PC-3 (cell line): ENCODE measurements at regions of chr11 and their contacts with region 1.

Region 1: DNA sequence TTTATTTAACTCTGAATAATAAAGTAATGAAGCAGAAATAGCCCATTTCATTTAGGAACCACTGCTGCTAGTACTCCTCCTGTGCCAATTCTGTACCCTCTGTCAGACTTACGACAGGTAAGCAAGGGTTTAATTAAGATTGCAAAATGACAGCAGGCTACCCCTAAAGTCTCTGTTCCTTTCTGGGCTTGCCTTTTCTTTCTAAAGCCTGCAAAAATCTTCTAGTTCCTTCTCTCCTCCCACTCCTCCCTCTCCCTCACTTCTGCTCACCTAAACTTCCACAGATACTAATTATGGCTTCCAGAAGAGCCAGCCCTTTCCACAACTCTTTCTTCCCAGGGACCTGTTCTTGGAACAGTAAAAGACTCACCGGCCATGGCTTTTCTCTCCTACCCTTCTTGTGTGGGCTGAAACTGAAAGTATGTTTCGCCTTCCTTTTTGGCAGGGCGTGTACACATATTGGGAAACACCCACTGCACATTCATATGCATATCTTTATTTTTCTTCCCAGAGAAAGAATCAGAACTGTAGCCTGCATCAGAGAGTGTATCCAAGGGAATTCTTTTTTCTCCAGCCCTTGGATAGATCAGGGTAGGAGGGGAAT is at the start of gene CARD16:
- DNase-seq: no peak
- ATAC-seq: no peak
- H3K4me3 ChIP-seq: no peak within 1 kb of the TSS
- H3K27ac ChIP-seq: no peak within 1 kb of the TSS
- H3K4me1 ChIP-seq: peaks cover 16% of the 10 kb centered on the region
- H3K27me3 ChIP-seq: no peaks in the 10 kb centered on the region
- CTCF ChIP-seq: no peak
- total RNA-seq, gene CARD16: not detected in 2 replicates

Region 2: DNA sequence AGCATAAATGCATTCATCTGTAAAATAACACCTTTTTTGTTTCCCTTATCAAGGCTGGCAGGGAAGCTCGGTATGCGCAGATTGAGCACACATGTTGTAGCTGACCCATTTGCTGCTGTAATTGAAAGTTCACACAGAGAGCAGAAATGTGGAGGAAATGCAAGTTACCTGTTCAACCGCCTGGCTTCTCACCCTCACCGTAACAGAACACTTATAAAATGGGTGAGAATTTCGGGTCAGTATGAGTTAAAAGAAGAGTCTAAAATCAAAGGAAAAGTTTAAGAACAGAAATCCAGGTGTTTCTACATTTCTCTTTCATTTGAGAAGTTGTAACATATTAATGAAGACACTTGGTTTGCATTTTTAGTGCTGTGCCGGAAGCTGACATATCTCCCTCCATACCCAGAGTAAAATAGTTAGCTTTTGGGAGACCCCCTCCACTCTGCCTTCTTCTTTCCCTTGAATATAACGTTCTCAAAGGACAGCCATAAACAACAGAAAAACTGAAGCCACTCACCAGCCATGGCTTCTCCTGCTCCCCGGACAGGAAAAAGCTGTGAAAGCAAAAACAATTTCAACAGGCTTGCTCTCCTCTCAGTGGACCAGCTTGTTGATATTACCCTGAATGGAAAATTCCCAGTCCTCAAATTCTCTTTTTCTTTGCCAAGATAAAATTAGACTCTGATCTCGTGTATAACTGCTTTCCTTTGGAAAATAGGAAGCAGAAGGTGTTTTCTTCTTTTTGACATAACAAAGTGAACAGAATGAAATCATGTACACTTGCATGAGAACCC is 146.9 kb before region 1 on chr11 and contains the start of gene CASP12:
- CTCF ChIA-PET with region 1: no interaction called
- POLR2A ChIA-PET with region 1: no interaction called
- intact Hi-C with region 1: no loop called
- DNase-seq: no peak
- ATAC-seq: no peak
- H3K4me3 ChIP-seq: no peak within 1 kb of the TSS
- H3K27ac ChIP-seq: no peak within 1 kb of the TSS
- H3K4me1 ChIP-seq: no peaks in the 10 kb centered on the region
- H3K27me3 ChIP-seq: no peaks in the 10 kb centered on the region
- CTCF ChIP-seq: no peak
- total RNA-seq, gene CASP12: not detected in 2 replicates

Region 3: DNA sequence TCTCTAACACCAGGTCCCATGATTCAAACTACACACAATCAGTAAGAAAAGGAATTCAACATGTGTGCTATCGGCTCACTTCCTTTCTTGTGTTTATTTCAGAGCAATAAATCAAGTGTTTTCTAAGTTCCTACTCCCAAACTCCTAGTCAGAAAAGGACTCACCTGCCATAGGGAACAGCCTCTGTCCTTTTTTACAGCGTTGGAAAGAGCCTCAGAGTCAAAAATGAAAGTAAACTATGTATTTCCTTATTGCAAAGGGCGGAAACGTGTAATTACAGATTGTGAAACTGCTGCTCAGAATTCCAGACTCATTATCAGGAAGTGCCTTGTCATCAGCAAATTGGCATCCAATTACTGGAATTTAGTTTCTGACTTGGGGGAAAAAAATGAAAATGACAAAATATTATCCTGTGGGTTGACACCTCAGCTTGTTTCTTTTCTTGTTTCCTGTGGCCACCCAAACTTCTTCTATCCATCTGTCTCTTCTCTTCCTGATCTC is 76.6 kb before region 1 on chr11 and contains the start of gene CASP4:
- CTCF ChIA-PET with region 1: no interaction called
- POLR2A ChIA-PET with region 1: no interaction called
- intact Hi-C with region 1: loop called (anchors 1 kb)
- DNase-seq: peak; percentile 81
- ATAC-seq: peak; percentile 79
- H3K4me3 ChIP-seq: peak within 1 kb of the TSS; percentile 74
- H3K27ac ChIP-seq: peak within 1 kb of the TSS; percentile 71
- H3K4me1 ChIP-seq: peaks cover 25% of the 10 kb centered on the region
- H3K27me3 ChIP-seq: no peaks in the 10 kb centered on the region
- CTCF ChIP-seq: no peak
- total RNA-seq, gene CASP4: 38.5 and 40.9 TPM in 2 replicates

Region 4: DNA sequence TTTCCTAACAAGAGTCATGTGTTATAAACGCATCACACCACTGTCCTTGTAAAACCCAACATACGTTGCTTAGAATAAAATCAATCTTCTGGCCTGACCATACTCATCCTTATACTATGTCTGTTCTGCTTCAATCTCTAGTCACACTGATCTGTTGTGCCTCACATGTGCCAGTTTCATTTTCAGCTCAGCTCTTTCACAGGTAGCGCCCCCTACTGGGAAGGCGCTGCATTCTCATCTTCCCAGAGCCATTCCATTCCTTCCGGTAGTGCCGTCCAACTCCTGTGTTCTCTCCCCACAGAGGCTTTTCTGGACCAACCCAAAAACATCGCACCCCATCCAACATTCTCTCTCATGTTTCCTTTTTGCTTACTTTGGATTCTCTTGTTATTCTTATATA is 44.2 kb before region 1 on chr11:
- CTCF ChIA-PET with region 1: no interaction called
- POLR2A ChIA-PET with region 1: no interaction called
- intact Hi-C with region 1: loop called (anchors 5 kb)
- DNase-seq: no peak
- ATAC-seq: no peak
- H3K4me3 ChIP-seq: no peak overlapping the region
- H3K27ac ChIP-seq: no peak overlapping the region
- H3K4me1 ChIP-seq: no peaks in the 10 kb centered on the region
- H3K27me3 ChIP-seq: no peaks in the 10 kb centered on the region
- CTCF ChIP-seq: peak; percentile 82

Region 5: DNA sequence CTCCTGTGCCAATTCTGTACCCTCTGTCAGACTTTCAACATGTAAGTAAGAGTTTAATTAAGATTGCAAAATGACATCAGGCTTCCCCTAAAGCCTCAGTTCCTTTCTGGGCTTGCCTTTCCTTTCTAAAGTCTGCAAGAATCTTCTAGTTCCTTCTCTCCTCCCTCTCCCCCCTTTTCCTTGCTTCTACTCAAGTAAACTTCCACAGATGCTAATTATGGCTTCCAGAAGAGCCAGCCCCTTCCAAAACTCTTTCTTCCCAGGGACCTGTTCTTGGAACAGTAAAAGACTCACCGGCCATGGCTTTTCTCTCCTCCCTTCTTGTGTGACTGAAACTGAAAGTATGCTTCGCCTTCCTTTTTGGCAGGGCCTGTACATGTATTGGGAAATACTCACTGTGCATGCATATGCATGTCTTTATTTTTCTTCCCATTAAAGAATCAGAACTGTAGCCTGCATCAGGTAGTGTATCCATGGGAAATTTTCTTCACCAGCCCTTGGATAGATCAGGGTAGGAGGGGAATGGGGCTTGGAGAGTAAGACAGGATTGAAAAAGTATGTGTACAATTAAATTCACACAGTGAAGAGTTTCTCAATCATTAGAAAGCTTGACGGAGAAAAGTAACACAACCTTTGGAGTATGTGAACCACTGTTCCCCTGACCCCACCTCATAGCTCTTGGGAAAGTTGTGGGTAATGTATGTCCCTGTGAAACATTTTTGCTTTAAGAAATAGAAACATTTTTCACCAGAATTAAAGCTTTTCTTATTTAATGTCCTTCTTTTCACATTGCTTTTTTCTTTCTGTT is 10.0 kb before region 1 on chr11 and contains the start of gene CASP1:
- CTCF ChIA-PET with region 1: no interaction called
- POLR2A ChIA-PET with region 1: no interaction called
- intact Hi-C with region 1: no loop called
- DNase-seq: peak; percentile 19
- ATAC-seq: peak; percentile 18; the same call in 1 of the 2 replicates
- H3K4me3 ChIP-seq: no peak within 1 kb of the TSS
- H3K27ac ChIP-seq: no peak within 1 kb of the TSS
- H3K4me1 ChIP-seq: no peaks in the 10 kb centered on the region
- H3K27me3 ChIP-seq: no peaks in the 10 kb centered on the region
- CTCF ChIP-seq: no peak
- total RNA-seq, gene CASP1: 0.33 TPM in 1 of 2 replicates, not detected in the other

Region 6: DNA sequence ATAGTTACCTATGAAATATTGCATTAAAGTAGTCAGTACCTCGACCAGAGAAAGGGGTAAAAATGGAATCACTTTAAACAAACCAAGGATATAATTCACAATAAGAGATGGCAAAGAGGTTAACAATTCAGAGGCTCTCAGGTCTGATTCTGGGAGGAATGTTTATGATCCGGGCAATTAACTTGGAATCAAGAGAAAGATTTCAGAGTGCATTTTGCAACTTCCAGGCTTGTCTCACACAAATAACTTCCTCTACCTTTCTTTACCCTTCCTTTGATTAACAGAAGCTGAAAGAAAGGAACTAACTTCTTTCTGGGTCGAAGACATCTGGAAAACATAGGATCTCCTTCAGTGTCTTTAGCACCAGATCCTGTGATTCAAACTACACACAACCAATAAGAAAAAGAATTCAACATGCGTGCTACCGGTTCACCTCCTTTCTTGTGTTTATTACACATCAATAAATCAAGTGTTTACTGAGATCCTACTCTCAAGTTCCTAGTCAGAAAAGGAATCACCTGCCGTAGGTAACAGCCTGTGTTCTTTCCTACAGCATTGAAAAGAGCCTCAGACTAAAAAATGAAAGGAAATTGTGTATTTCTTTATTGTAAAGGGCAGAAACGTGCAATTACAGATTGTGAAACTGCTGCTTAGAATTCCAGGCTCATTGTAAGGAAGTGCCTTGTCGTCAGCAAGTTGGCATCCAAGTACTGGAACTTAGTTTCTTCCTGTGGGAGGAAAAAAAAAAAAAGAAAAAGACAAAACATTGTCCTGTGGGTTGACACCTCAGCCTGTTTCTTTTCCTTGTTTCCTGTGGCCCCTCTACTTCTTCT is 65.0 kb after region 1 on chr11:
- CTCF ChIA-PET with region 1: no interaction called
- POLR2A ChIA-PET with region 1: no interaction called
- intact Hi-C with region 1: loop called (anchors 5 kb)
- DNase-seq: peak; percentile 29
- ATAC-seq: peak; percentile 7; the same call in 1 of the 2 replicates
- H3K4me3 ChIP-seq: peak overlapping the region; percentile 13; the same call in 1 of the 2 replicates
- H3K27ac ChIP-seq: peak overlapping the region; percentile 69
- H3K4me1 ChIP-seq: peaks cover 40% of the 10 kb centered on the region
- H3K27me3 ChIP-seq: no peaks in the 10 kb centered on the region
- CTCF ChIP-seq: no peak

Region 7: GRCh38 chr11:105144887-105145286 is 99.9 kb after region 1 on chr11:
- CTCF ChIA-PET with region 1: no interaction called
- POLR2A ChIA-PET with region 1: no interaction called
- intact Hi-C with region 1: loop called (anchors 1 kb)
- DNase-seq: peak; percentile 91
- ATAC-seq: peak; percentile 99
- H3K4me3 ChIP-seq: peak overlapping the region; percentile 4; the same call in 1 of the 2 replicates
- H3K27ac ChIP-seq: peak overlapping the region; percentile 45
- H3K4me1 ChIP-seq: peaks cover 16% of the 10 kb centered on the region
- H3K27me3 ChIP-seq: no peaks in the 10 kb centered on the region
- CTCF ChIP-seq: no peak

Region 8: GRCh38 chr11:105151936-105152554 is 107.0 kb after region 1 on chr11:
- CTCF ChIA-PET with region 1: no interaction called
- POLR2A ChIA-PET with region 1: no interaction called
- intact Hi-C with region 1: loop called (anchors 2 kb)
- DNase-seq: peak; percentile 88
- ATAC-seq: peak; percentile 95
- H3K4me3 ChIP-seq: peak overlapping the region; percentile 41
- H3K27ac ChIP-seq: peak overlapping the region; percentile 88
- H3K4me1 ChIP-seq: peaks cover 22% of the 10 kb centered on the region
- H3K27me3 ChIP-seq: no peaks in the 10 kb centered on the region
- CTCF ChIP-seq: no peak

Region 9: GRCh38 chr11:105644839-105645573 is 600.0 kb after region 1 on chr11:
- CTCF ChIA-PET with region 1: no interaction called
- POLR2A ChIA-PET with region 1: no interaction called
- intact Hi-C with region 1: no loop called
- DNase-seq: no peak
- ATAC-seq: no peak
- H3K4me3 ChIP-seq: no peak overlapping the region
- H3K27ac ChIP-seq: no peak overlapping the region
- H3K4me1 ChIP-seq: no peaks in the 10 kb centered on the region
- H3K27me3 ChIP-seq: no peaks in the 10 kb centered on the region
- CTCF ChIP-seq: no peak

Region 10: GRCh38 chr11:105740164-105740903 is 695.3 kb after region 1 on chr11:
- CTCF ChIA-PET with region 1: no interaction called
- POLR2A ChIA-PET with region 1: no interaction called
- intact Hi-C with region 1: loop called (anchors 1 kb)
- DNase-seq: no peak
- ATAC-seq: no peak
- H3K4me3 ChIP-seq: no peak overlapping the region
- H3K27ac ChIP-seq: no peak overlapping the region
- H3K4me1 ChIP-seq: peaks cover 21% of the 10 kb centered on the region
- H3K27me3 ChIP-seq: no peaks in the 10 kb centered on the region
- CTCF ChIP-seq: no peak